ENCODE measurements at regions of chr2 and their contacts with region 1.

Region 1: DNA sequence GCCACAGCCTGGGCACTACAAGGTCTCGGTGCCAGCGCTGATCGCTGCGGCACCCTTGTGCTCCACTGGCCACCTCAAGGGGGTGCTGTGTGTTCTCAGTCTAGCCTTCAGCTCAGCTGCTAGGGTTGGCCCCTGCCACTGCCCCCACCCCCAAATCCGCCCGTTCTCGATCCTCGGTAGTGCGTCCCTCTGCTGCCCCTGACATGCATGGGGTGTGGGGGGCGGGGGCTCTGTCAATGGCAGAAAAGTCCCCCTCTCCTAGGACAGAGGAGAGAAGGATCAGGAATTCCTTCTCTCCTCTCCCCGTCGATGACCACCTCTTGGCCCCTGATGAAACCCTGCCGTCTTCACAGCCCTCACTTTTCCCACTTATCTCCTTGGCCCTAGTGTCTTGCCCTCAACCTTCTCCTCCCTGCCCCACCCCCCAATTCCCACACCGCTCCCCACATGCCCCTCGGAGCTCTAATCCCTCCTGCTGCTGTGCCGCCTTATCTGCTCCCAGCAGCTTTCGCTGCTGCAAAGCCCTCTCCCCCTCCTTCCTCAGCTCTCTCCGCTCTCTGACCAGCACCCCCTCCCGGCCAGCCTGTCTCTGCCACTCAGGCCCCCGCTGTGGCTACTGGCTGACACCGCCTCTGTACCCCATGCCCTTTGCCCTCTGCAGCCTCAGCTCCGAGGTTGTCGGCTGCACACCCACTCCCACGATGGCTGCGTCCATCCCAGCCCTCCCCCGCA is 4.3 kb upstream of the ASIC4 start:
- DNase-seq: peak; percentile 80 to 81
- H3K4me3 ChIP-seq: peak overlapping the region; percentile 64
- H3K4me3 Mint-ChIP-seq: peak overlapping the region; percentile 80
- H3K27ac Mint-ChIP-seq: no peak overlapping the region
- H3K4me1 ChIP-seq: peaks cover 12% of the 10 kb centered on the region
- H3K4me1 Mint-ChIP-seq: peaks cover 18% of the 10 kb centered on the region
- H3K27me3 ChIP-seq: peaks cover 5% of the 10 kb centered on the region; the same call in 1 of the 2 replicates
- H3K27me3 Mint-ChIP-seq: peaks cover 20% of the 10 kb centered on the region
- CTCF ChIP-seq: peak; percentile 68 to 90

Region 2: DNA sequence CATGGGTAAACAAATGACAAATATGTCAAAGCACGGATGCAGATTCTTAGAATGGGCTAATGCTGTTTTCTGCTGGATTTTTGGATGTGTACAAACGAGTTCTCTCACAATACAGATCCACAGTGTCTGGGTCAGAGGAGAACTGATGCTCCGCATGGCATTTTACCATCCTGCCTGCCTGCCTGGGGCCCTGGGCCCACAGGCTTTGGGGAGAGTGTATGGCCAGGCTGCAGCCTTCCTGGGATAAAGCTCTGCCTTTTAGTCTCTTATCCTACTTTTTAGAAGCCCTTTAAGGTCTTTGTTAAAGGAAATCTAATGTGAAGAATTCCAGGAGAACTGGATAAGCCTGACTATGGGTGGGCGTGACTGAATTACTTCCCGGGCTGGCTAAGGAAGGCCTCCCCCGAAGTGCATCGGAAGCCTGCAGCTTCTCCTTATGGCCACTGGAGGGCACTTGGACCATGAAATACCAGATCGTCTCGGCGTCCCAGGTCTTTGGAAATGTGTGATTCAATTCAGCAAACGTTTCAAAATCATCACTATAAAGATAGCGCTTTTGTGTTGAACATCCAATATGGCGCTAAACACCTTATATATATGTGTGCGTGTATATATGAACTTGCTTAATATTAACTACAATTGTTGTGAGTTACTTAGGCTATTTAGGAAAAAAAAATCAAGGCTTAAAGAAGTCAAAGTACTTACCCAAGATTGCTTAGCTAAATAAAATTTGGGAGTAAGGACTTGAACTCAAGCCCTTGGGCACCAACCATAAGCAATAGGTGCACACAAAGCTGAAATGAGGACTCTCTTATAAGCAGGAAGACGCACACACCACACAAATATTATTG is 107.1 kb before region 1 on chr2:
- CTCF ChIA-PET with region 1: interaction called, 11 read pairs
- POLR2A ChIA-PET with region 1: interaction called, 3 read pairs
- intact Hi-C with region 1: no loop called
- DNase-seq: peak; percentile 78 to 80
- H3K4me3 ChIP-seq: no peak overlapping the region
- H3K4me3 Mint-ChIP-seq: no peak overlapping the region
- H3K27ac Mint-ChIP-seq: no peak overlapping the region
- H3K4me1 ChIP-seq: peaks cover 28% of the 10 kb centered on the region
- H3K4me1 Mint-ChIP-seq: peaks cover 28% of the 10 kb centered on the region
- H3K27me3 ChIP-seq: no peaks in the 10 kb centered on the region
- H3K27me3 Mint-ChIP-seq: no peaks in the 10 kb centered on the region
- CTCF ChIP-seq: peak; percentile 82 to 95

Region 3: DNA sequence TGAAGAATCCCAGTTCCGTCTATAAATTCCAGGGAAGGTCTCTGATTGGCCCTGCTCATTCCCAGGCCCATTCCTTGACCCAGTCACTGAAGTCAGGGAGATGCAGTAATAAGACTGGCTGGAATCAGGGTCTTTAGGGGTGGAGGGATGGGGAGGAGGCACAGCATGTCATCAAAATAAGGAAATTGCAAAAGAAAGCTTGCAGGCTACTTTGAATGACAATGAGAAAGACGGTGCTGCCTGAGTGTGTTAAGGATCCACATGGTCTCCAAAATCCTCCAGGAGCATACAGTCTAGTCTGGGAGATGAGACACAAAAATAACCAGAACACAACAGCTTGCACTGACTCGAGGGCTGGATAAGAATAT is 93.7 kb before region 1 on chr2:
- CTCF ChIA-PET with region 1: no interaction called
- POLR2A ChIA-PET with region 1: no interaction called
- intact Hi-C with region 1: no loop called
- DNase-seq: no peak
- H3K4me3 ChIP-seq: no peak overlapping the region
- H3K4me3 Mint-ChIP-seq: no peak overlapping the region
- H3K27ac Mint-ChIP-seq: no peak overlapping the region
- H3K4me1 ChIP-seq: no peaks in the 10 kb centered on the region
- H3K4me1 Mint-ChIP-seq: no peaks in the 10 kb centered on the region
- H3K27me3 ChIP-seq: no peaks in the 10 kb centered on the region
- H3K27me3 Mint-ChIP-seq: peaks cover 4% of the 10 kb centered on the region
- CTCF ChIP-seq: no peak

Region 4: GRCh38 chr2:219475697-219476651 is 34.0 kb before region 1 on chr2:
- CTCF ChIA-PET with region 1: interaction called, 22 read pairs
- POLR2A ChIA-PET with region 1: interaction called, 3 read pairs
- intact Hi-C with region 1: no loop called
- DNase-seq: peak; percentile 74 to 87
- H3K4me3 ChIP-seq: no peak overlapping the region
- H3K4me3 Mint-ChIP-seq: peak overlapping the region; percentile 10
- H3K27ac Mint-ChIP-seq: no peak overlapping the region
- H3K4me1 ChIP-seq: no peaks in the 10 kb centered on the region
- H3K4me1 Mint-ChIP-seq: no peaks in the 10 kb centered on the region
- H3K27me3 ChIP-seq: no peaks in the 10 kb centered on the region
- H3K27me3 Mint-ChIP-seq: no peaks in the 10 kb centered on the region
- CTCF ChIP-seq: peak; percentile 91 to 94

Region 5: GRCh38 chr2:219521066-219521880 is 11.3 kb after region 1 on chr2:
- CTCF ChIA-PET with region 1: interaction called, 27 read pairs
- POLR2A ChIA-PET with region 1: no interaction called
- intact Hi-C with region 1: loop called (anchors 1 kb)
- DNase-seq: peak; percentile 73 to 74
- H3K4me3 ChIP-seq: 0 out of 2 replicates have a peak overlapping the region, but pooled peaks have one; percentile 5
- H3K4me3 Mint-ChIP-seq: peak overlapping the region; percentile 58
- H3K27ac Mint-ChIP-seq: peak overlapping the region; percentile 73
- H3K4me1 ChIP-seq: peaks cover 24% of the 10 kb centered on the region
- H3K4me1 Mint-ChIP-seq: peaks cover 22% of the 10 kb centered on the region
- H3K27me3 ChIP-seq: no peaks in the 10 kb centered on the region
- H3K27me3 Mint-ChIP-seq: peaks cover 13% of the 10 kb centered on the region
- CTCF ChIP-seq: peak; percentile 81 to 97

Region 6: DNA sequence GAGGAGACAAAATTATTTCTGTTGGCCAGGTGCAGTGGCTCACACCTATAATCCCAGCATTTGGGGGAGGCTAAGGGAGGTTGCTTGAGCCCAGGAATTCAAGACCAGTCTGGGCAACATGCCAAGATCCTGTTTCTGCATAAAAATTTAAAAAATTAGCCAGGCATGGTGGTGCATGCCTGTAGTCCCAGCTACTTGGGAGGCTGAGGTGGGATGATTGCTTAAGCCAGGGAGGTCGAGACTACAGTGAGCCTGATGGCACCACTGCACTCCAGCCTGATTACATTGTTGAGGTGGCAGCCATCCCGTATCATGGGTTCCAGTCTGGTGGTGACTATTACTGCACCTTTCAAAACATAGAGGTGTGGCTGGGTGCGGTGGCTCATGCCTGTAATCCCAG is 71.5 kb after region 1 on chr2:
- CTCF ChIA-PET with region 1: no interaction called
- POLR2A ChIA-PET with region 1: no interaction called
- intact Hi-C with region 1: no loop called
- DNase-seq: no peak
- H3K4me3 ChIP-seq: no peak overlapping the region
- H3K4me3 Mint-ChIP-seq: no peak overlapping the region
- H3K27ac Mint-ChIP-seq: no peak overlapping the region
- H3K4me1 ChIP-seq: peaks cover 12% of the 10 kb centered on the region; the same call in 1 of the 2 replicates
- H3K4me1 Mint-ChIP-seq: peaks cover 20% of the 10 kb centered on the region
- H3K27me3 ChIP-seq: no peaks in the 10 kb centered on the region
- H3K27me3 Mint-ChIP-seq: peaks cover 2% of the 10 kb centered on the region
- CTCF ChIP-seq: no peak

Measured in Caco-2 (cell line).